ENCODE measurements at regions of chr12 and their contacts with region 1.

Region 1: GRCh38 chr12:17592472-17592871 is 497.5 kb downstream of the RERGL start:
- DNase-seq: no peak
- H3K4me3 ChIP-seq: no peak overlapping the region
- CTCF ChIP-seq: no peak
- POLR2A ChIP-seq: no peak

Region 2: DNA sequence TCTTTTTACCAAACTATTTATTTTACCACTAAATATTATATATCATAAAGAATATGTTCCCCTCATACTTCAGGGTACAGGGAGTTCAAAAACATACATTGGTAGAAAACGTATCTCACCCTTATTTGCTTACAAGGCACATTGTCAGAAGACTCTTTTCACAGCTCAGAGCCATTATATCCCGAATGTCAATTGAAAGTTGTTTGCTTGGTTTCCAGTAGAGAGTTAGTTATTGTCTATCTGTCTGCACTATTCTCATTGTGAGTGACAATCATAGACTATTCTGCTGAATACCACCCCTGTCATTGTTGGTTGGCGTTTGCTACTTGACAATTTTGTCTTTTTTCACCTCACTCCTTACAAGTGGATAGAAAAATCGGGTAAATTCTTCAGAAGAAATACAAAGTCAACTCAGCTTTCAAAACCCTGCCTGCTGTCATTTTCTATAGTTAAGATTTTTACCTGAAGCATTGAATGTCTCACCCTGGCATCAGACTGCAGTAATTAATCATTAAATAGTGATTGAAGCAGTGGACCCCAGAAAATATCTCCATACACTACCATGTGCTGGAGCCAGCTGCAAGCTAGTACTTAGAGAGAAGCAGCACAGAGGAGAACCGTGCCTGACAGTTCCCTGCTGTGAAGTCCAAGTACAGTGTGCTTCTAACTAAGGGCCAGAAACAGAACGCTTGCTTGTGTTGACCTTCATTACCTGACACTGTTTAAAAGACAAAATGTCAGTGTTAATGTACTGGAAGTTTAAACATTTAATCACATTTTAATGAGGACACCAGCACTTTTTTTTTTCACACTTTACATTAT is 13.1 kb before region 1 on chr12:
- intact Hi-C with region 1: loop called (anchors 1 kb)
- DNase-seq: no peak
- H3K4me3 ChIP-seq: no peak overlapping the region
- CTCF ChIP-seq: no peak
- POLR2A ChIP-seq: no peak

Region 3: DNA sequence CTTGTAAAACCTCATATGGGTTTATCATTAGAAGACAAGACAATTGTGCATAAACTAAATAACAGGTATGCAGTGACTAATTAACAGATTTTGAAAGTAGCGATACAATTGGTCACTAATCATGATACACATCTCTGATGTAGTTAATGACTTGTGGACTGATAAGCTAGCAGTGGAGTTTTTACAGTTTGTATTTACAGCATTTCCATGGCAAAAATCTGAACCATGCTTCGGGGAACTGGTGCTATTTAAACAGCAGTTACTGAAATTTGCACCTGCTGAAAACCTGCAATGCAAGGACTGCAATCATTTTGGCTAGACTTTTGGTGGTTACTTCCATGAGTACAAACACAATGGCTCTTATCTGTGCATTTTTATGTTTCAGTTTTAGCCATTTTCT is 26.4 kb after region 1 on chr12:
- intact Hi-C with region 1: no loop called
- DNase-seq: no peak
- H3K4me3 ChIP-seq: no peak overlapping the region
- CTCF ChIP-seq: no peak
- POLR2A ChIP-seq: no peak